CD8-positive, alpha-beta T cell (primary cell): ENCODE measurements at regions of chr2 and their contacts with region 1.

Region 1: DNA sequence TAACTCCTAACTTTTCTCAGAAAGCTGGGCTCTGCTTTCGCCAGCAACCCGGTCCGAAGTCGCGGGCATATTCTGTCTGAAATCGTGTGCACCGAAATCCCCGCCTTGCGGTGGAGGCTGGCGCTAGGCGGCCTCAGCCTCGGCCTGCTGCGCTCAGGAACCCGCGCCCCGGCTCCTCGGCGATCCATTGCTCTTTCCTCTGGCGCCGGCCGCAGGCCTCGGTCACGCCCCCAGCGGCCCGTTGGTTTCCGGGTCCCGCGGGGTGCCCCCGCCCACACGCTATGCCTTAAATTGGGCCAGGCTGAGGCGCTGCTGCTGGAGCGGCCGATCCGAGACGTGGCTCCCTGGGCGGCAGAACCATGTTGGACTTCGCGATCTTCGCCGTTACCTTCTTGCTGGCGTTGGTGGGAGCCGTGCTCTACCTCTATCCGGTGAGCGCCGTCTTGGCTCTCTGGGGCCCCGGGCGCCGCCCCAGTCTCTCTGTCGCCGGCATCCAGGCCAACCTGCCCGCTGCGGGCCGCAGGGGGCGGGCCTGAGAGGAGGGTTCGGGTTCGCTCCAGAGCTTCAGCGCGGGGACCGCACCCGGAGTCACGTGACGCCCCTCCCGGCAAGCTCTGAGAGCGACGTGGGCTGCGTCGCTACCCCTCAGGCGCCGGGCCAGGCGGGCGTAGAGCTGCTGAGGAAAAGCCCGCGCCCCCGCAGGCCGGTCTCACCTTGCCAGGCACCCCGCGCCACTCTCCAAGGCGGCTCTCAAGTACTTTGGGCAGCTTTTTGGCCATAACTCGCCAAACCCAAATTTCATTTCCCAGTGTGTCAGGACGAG is at the start of gene CYP20A1:
- DNase-seq: peak; percentile 95 to 98 (median 97)
- ATAC-seq: peak; percentile 81
- H3K4me3 ChIP-seq: peak within 1 kb of the TSS; percentile 88 to 89
- H3K4me3 Mint-ChIP-seq: peak within 1 kb of the TSS; percentile 99
- H3K27ac ChIP-seq: peak within 1 kb of the TSS; percentile 92 to 98
- H3K27ac Mint-ChIP-seq: peak within 1 kb of the TSS; percentile 100
- H3K4me1 ChIP-seq: peaks cover 15% of the 10 kb centered on the region
- H3K4me1 Mint-ChIP-seq: peaks cover 30% of the 10 kb centered on the region
- H3K27me3 ChIP-seq: no peaks in the 10 kb centered on the region
- H3K27me3 Mint-ChIP-seq: no peaks in the 10 kb centered on the region
- CTCF ChIP-seq: no peak
- total RNA-seq, gene CYP20A1: 22.6 to 24.6 TPM

Region 2: GRCh38 chr2:201642579-201643215 is 1596.2 kb before region 1 on chr2:
- CTCF ChIA-PET with region 1: no interaction called
- POLR2A ChIA-PET with region 1: no interaction called
- intact Hi-C with region 1: loop called in 1 of 2 experiments (anchors 5 kb)
- DNase-seq: peak; percentile 65 to 91 (median 83)
- ATAC-seq: peak; percentile 86
- H3K4me3 ChIP-seq: peak overlapping the region; percentile 98 to 99
- H3K4me3 Mint-ChIP-seq: peak overlapping the region; percentile 90
- H3K27ac ChIP-seq: peak overlapping the region; percentile 89 to 99
- H3K27ac Mint-ChIP-seq: peak overlapping the region; percentile 96
- H3K4me1 ChIP-seq: no peaks in the 10 kb centered on the region
- H3K4me1 Mint-ChIP-seq: peaks cover 14% of the 10 kb centered on the region
- H3K27me3 ChIP-seq: no peaks in the 10 kb centered on the region
- H3K27me3 Mint-ChIP-seq: no peaks in the 10 kb centered on the region
- CTCF ChIP-seq: no peak

Region 3: GRCh38 chr2:202238234-202239197 is 1000.4 kb before region 1 on chr2 and contains the start of gene SUMO1:
- CTCF ChIA-PET with region 1: no interaction called
- POLR2A ChIA-PET with region 1: interaction called, 3 read pairs
- intact Hi-C with region 1: loop called in 1 of 2 experiments (anchors 2 kb)
- DNase-seq: peak; percentile 79 to 95 (median 92)
- ATAC-seq: peak; percentile 93
- H3K4me3 ChIP-seq: peak within 1 kb of the TSS; percentile 82 to 83
- H3K4me3 Mint-ChIP-seq: peak within 1 kb of the TSS; percentile 99
- H3K27ac ChIP-seq: peak within 1 kb of the TSS; percentile 82
- H3K27ac Mint-ChIP-seq: peak within 1 kb of the TSS; percentile 99
- H3K4me1 ChIP-seq: peaks cover 15% of the 10 kb centered on the region
- H3K4me1 Mint-ChIP-seq: peaks cover 43% of the 10 kb centered on the region
- H3K27me3 ChIP-seq: no peaks in the 10 kb centered on the region
- H3K27me3 Mint-ChIP-seq: no peaks in the 10 kb centered on the region
- CTCF ChIP-seq: no peak
- total RNA-seq, gene SUMO1: 86.1 to 87.4 TPM

Region 4: GRCh38 chr2:202375609-202376408 is 863.1 kb before region 1 on chr2 and contains the start of gene BMPR2:
- CTCF ChIA-PET with region 1: no interaction called
- POLR2A ChIA-PET with region 1: no interaction called
- intact Hi-C with region 1: loop called in 1 of 2 experiments (anchors 2 kb)
- DNase-seq: peak; percentile 63 to 90 (median 81)
- ATAC-seq: peak; percentile 77
- H3K4me3 ChIP-seq: peak within 1 kb of the TSS; percentile 61 to 100
- H3K4me3 Mint-ChIP-seq: peak within 1 kb of the TSS; percentile 99
- H3K27ac ChIP-seq: peak within 1 kb of the TSS; percentile 64 to 80
- H3K27ac Mint-ChIP-seq: peak within 1 kb of the TSS; percentile 93
- H3K4me1 ChIP-seq: peaks cover 23% of the 10 kb centered on the region
- H3K4me1 Mint-ChIP-seq: peaks cover 30% of the 10 kb centered on the region
- H3K27me3 ChIP-seq: no peaks in the 10 kb centered on the region
- H3K27me3 Mint-ChIP-seq: no peaks in the 10 kb centered on the region
- CTCF ChIP-seq: no peak
- total RNA-seq, gene BMPR2: 9.4 to 9.6 TPM

Region 5: DNA sequence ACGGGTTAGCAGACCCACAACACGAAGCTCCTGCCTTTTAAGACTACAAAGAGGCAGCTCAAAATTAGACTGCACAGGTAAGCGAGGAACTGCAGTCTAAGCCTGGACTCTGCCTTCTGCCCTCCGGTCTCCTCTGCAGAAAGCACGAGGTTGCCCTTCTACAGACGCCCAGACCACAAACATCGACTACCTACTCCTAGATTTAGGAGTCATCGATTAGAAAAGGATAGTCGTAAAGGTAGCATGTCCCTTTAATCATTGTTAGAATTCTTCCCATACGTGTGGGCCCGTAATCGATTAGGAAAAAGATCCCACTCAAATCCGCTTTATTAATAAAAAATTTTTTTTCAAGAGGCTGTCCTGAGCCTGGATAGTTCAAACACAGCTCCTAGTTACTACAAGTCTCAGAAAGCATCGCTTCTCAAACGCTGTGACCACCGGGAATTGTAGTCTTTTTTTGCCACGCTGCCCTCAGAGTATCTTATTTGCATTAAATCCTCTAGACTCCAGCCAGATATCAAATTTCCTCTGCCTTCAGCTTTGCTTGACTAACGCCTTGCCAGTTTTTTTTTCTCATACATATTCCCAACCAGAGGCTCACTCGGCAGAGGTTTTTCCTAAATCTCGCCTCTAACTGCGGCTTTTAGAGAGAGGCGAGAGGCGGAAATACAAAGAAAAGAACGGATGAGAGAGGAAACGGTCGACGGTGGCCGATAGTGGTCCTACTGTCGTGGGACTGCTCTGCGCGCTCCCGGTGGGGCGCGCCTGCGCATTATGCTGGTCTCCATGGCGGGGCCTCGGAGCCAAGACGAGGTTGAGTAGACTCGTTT is 327.2 kb before region 1 on chr2 and contains the starts of genes CARF and WDR12:
- CTCF ChIA-PET with region 1: no interaction called
- POLR2A ChIA-PET with region 1: interaction called, 5 read pairs
- intact Hi-C with region 1: loop called (anchors 1 kb)
- DNase-seq: peak; percentile 77 to 96 (median 90)
- ATAC-seq: peak; percentile 81
- H3K4me3 ChIP-seq: peak within 1 kb of the TSS; percentile 89 to 98
- H3K4me3 Mint-ChIP-seq: peak within 1 kb of the TSS; percentile 96
- H3K27ac ChIP-seq: peak within 1 kb of the TSS; percentile 70 to 92
- H3K27ac Mint-ChIP-seq: peak within 1 kb of the TSS; percentile 92
- H3K4me1 ChIP-seq: peaks cover 17% of the 10 kb centered on the region
- H3K4me1 Mint-ChIP-seq: peaks cover 42% of the 10 kb centered on the region
- H3K27me3 ChIP-seq: no peaks in the 10 kb centered on the region
- H3K27me3 Mint-ChIP-seq: no peaks in the 10 kb centered on the region
- CTCF ChIP-seq: no peak
- total RNA-seq, gene CARF: 6.3 to 8.7 TPM
- total RNA-seq, gene WDR12: 4.7 to 6.4 TPM

Region 6: DNA sequence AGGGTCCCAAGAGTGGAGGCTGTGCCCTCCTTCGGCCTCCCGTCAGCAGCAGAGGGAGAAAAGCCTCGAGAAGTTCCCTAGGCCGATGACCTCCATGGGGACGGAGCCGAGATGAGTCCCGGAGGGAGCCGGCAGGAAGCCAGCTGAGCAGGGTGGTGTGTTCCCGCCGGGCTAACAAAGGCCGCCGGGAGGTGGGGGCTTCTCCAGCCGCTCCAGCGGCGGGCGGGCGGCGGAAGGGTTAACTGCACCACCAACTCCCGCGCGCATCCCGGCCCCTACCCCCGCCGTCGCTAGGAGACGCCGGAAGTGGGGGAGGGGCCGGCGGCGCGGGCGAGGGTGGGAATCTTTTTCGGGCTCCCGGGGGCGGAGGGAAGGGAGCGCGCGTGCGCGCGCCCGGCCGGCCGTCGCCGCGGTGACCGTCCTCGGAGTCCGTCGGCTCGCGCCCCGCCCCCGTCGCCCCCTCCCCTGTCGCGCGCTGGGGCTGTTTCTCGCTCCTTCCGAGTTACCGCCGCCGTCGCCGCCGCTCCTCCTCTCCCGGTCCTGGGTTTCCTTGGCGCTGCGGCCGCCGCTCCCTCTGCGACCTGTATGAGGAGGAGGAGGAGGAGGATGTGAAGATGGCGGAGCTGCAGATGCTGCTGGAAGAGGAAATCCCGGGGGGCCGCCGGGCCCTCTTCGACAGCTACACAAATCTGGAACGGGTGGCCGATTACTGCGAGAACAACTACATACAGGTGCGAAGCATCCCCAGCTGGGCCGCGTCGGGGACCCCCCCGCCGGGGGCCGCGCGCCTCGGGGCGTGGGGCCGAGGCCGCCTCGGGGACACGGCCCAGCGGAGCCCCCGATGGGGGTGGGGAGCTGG is 89.2 kb after region 1 on chr2 and contains the start of gene ABI2:
- CTCF ChIA-PET with region 1: no interaction called
- POLR2A ChIA-PET with region 1: interaction called, 6 read pairs
- intact Hi-C with region 1: loop called (anchors 2 to 5 kb)
- DNase-seq: peak in 8 of 9 experiments; percentile 42 to 76 (median 66)
- ATAC-seq: peak; percentile 73
- H3K4me3 ChIP-seq: peak within 1 kb of the TSS; percentile 87 to 95
- H3K4me3 Mint-ChIP-seq: peak within 1 kb of the TSS; percentile 89
- H3K27ac ChIP-seq: peak within 1 kb of the TSS; percentile 52 to 78
- H3K27ac Mint-ChIP-seq: peak within 1 kb of the TSS; percentile 83
- H3K4me1 ChIP-seq: peaks cover 20% of the 10 kb centered on the region
- H3K4me1 Mint-ChIP-seq: peaks cover 34% of the 10 kb centered on the region
- H3K27me3 ChIP-seq: no peaks in the 10 kb centered on the region
- H3K27me3 Mint-ChIP-seq: no peaks in the 10 kb centered on the region
- CTCF ChIP-seq: no peak
- total RNA-seq, gene ABI2: 17.7 to 19.7 TPM